OCI-LY7 (cell line): ENCODE measurements at regions of chr5 and their contacts with region 1.

Region 1: DNA sequence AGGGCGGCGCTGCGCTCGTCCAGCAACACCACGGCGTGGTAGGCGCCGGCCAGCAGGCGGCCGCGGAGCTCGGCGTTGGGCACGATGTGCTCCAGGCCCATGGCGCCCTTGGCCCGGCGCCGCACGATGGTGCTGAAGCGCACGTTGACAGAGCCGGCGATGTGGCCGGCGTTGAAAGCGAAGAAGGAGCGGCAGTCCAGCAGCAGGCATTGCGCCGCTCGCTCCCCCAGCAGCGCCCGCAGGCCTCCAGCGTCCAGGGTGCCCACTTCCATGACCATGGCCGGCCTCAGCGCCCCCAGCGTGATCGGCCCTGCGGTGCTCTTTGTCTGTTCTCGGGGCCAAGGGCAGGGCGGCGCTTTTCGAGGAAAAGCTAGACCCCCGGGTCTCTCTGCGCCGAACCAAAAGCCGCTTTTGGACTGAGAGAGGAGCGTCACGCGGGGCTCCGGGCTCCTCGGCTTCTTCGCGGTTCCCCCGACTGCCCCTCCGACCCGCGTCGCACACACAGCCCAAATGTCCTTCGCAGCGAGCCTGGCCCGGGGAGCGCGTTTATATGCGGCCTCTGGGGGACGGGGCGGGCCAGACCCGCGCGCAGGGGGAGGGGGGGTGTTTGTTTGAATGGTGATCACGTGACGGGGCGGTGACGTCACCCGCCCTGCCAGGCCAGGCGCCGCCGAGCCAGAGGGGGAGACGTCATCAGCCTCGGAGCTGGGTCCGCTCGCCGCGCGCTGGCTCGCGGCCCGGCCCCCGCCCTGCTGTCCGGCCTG is at the start of gene DUSP1:
- DNase-seq: peak; percentile 93
- H3K4me3 ChIP-seq: peak within 1 kb of the TSS; percentile 82
- H3K27ac ChIP-seq: peak within 1 kb of the TSS; percentile 44
- H3K4me1 ChIP-seq: peaks cover 29% of the 10 kb centered on the region
- CTCF ChIP-seq: peak; percentile 59
- total RNA-seq, gene DUSP1: 5.3 and 7.0 TPM in 2 replicates

Region 2: GRCh38 chr5:172910828-172911627 is 140.2 kb after region 1 on chr5:
- CTCF ChIA-PET with region 1: no interaction called
- POLR2A ChIA-PET with region 1: no interaction called
- intact Hi-C with region 1: loop called (anchors 2 kb)
- DNase-seq: peak; percentile 35
- H3K4me3 ChIP-seq: no peak overlapping the region
- H3K27ac ChIP-seq: no peak overlapping the region
- H3K4me1 ChIP-seq: peaks cover 9% of the 10 kb centered on the region
- CTCF ChIP-seq: peak; percentile 42

Region 3: GRCh38 chr5:172932313-172933017 is 161.6 kb after region 1 on chr5:
- CTCF ChIA-PET with region 1: interaction called, 4 read pairs
- POLR2A ChIA-PET with region 1: interaction called, 3 read pairs
- intact Hi-C with region 1: loop called (anchors 5 kb)
- DNase-seq: peak; percentile 64
- H3K4me3 ChIP-seq: no peak overlapping the region
- H3K27ac ChIP-seq: no peak overlapping the region
- H3K4me1 ChIP-seq: no peaks in the 10 kb centered on the region
- CTCF ChIP-seq: peak; percentile 91